AG04450 (cell line): ENCODE measurements at regions of chr7 and their contacts with region 1.

Region 1: DNA sequence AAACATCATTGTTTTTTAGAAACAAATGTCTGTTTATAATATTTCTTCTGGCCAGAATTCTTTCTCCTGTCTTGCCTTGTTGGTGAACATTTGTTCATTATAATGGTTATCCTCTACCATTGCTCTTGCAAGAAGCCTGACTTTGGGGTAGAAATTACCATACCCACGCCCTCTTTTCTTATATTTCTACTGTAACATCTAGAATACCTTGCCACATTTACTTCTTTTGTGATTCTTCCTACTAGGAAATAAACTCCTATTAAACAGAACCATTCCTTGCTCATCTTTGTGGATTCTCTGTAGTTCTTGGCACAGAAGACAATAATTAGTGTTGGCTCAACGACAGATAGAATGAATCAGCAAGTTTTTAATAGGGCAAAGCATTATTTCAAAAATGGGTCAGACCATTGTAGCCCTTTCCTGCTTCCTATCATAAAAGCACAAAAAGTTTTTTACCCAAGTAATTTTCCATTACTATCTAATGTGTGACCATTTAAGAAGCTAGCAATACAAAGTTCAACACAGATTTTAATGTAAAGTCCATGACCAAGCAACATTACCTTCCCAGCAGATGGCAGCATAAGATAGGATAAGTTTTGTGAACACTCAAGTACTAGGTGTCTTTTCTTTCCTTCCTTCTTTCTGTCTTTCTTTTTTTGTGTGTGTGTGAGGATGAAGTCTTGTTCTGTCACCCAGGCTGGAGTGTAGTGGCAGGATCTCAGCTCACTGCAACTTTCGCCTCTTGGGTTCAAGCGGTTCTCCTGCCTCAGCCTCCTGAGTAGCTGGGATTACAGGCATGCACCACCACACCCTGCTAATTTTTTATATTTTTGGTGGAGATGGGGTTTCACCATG is 270.4 kb downstream of the HGF start:
- DNase-seq: peak; percentile 72
- H3K4me3 ChIP-seq: no peak overlapping the region
- H3K27ac ChIP-seq: no peak overlapping the region
- H3K27me3 ChIP-seq: no peaks in the 10 kb centered on the region
- CTCF ChIP-seq: peak; percentile 68

Region 2: DNA sequence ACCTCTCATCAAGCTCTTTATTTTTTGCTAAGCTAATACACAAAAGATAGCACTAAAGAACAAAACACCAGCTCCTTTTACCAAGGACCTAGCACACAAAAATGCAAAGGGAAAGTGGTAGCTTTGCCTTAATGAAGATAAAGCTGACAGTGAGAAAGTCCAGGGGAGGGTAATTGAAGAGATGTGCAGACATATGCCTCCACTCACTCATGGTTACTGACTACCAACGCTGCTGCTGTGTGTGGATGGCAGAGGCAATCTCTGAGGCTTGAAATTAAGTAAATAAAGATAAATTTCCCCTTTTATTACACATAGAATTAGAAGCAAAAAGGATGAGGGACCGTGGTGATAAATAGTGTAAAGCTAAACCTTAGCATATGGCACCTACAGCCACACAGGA is 183.4 kb after region 1 on chr7:
- CTCF ChIA-PET with region 1: no interaction called
- POLR2A ChIA-PET with region 1: no interaction called
- DNase-seq: no peak
- H3K4me3 ChIP-seq: no peak overlapping the region
- H3K27ac ChIP-seq: no peak overlapping the region
- H3K27me3 ChIP-seq: no peaks in the 10 kb centered on the region
- CTCF ChIP-seq: no peak

Region 3: DNA sequence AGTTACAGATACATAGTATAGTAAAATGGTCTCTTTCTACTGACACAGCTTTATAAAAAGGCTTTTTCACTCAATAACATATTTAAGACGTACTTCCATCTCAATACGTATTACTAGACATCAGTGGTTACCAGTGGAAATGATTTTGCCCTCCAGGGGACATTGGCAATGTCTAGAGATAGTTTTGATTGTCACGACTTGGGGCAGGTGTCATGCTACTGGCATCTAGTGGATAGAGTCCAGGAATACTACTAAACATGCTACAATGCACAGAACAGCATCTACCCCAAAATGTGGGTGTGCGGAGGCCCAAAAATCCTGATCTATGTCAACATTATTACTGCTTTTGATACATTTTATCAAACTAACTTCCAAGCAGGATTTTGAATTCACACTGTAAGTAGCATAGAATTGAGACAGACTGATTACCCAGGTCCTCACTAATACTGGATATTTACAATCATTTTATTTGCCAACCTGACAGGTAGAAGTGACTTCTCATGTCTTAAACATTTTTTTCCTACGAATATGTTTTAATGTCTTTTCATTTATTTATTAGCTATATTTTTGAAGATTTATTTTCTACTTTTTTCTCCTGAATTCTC is 216.6 kb after region 1 on chr7:
- CTCF ChIA-PET with region 1: interaction called, 56 read pairs
- POLR2A ChIA-PET with region 1: no interaction called
- DNase-seq: no peak
- H3K4me3 ChIP-seq: no peak overlapping the region
- H3K27ac ChIP-seq: no peak overlapping the region
- H3K27me3 ChIP-seq: no peaks in the 10 kb centered on the region
- CTCF ChIP-seq: peak; percentile 32; the same call in 1 of the 2 replicates

Region 4: DNA sequence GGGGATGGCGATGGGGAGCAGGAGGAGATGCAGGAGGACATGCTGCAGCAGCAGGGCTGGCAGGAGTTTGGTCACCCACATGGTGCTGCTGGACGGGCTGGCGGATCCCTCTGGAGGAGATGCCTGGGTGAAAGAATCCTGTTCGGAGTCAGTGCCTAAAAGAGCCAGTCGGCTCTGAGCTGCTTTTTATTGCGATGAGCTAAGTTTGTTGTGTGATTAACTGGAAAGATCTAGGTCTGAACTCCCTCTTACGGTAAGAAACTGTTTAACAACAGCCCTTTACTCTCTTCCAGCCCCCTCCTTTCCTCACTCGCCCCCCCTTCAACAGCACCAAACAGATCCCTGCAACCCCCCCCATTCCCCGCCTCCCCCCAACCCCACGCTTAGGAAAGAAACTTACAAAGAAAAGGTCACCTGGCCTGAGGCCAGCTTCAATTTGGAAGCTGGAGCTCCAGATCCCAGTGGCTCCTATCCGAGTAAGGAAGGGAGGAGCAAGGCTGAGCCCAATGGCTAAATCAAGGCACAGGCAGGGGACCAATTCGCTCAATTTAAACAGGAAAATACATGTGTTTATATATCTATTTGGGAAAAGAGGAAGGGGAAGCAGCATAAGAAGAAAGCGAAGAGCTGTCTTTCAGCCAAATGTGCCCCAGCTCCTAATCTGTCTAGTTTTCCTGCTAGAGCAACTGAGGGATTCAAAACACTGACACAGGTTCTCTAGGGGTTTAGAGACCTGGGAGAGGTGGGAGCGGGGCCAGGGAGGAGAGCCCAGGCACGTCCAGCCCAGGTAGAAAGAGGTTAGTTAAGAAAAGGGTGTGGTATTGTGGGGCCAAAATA is 270.6 kb after region 1 on chr7 and contains the start of gene HGF:
- CTCF ChIA-PET with region 1: interaction called, 49 read pairs
- POLR2A ChIA-PET with region 1: no interaction called
- DNase-seq: peak; percentile 70
- H3K4me3 ChIP-seq: peak within 1 kb of the TSS; percentile 76
- H3K27ac ChIP-seq: peak within 1 kb of the TSS; percentile 54
- H3K27me3 ChIP-seq: no peaks in the 10 kb centered on the region
- CTCF ChIP-seq: peak; percentile 50
- polyA plus RNA-seq, gene HGF: 105 and 129 TPM in 2 replicates

Region 5: DNA sequence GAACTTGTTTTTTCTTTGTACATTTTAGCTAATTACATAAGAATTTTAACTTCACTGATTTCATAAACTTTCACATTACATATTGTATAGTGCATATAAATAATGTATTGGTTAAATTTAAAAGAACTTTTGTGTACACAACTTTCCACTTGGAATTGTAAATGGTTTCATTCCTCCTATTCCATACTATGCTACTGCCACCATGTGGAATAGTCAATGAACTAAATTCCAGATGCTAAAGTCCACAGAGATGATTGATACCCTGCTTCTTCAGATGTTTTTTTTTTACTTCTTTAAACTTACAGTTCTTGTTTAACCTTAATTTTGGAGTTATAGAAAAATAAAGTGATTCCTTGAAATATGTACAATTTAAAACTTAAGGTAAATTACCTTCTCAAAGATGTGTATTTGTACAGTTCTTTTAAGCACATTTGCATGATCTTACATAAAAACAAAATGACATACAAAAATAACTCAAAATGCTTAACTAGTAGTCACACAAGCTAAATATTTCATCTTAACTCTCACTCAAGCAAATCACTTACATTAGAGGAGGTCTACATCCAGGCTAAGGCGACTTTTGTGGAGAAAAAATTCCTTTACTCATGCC is 518.0 kb after region 1 on chr7:
- CTCF ChIA-PET with region 1: interaction called, 132 read pairs
- POLR2A ChIA-PET with region 1: no interaction called
- DNase-seq: peak; percentile 13
- H3K4me3 ChIP-seq: no peak overlapping the region
- H3K27ac ChIP-seq: no peak overlapping the region
- H3K27me3 ChIP-seq: no peaks in the 10 kb centered on the region
- CTCF ChIP-seq: peak; percentile 65

Region 6: DNA sequence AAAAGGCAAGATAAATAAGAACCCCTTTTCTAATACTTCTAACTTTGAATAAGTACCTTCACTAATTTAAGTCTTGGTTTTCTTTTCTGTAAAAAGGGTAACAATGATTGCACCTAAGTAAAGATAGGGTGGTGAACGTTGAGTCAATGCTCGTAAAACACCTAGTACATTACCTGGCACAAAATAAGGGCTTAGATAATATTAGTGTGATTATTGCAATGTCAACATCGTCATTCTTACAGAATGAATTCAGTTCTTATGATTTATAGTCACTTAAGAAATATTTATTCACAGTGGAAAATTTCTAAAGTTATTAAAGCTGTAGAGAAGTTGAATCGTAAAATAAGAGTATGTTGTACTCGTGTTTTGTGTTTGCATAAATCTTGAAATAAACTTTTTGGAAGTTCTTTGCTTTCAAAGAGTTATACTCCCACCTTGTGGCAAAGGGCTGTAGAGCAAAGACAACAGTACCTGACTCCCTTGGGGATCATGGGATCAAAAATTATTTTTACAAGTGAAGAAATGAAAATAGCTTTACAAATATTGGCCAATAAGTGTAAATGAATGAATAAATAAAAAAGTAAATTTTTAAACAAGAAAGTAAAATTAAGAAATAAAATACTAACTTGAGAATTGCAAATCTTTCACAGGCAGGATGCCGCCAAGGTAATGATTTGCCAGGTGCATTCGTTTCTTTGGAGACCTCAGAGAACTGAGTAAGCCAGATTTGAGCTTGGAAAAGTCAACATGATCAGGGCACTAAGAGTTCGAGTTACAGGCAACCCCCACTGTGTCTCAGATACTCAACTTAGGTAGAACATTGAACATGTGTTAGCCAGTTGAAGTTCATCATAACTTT is 1229.9 kb after region 1 on chr7:
- CTCF ChIA-PET with region 1: interaction called, 26 read pairs
- POLR2A ChIA-PET with region 1: no interaction called
- DNase-seq: peak; percentile 27
- H3K4me3 ChIP-seq: no peak overlapping the region
- H3K27ac ChIP-seq: no peak overlapping the region
- H3K27me3 ChIP-seq: no peaks in the 10 kb centered on the region
- CTCF ChIP-seq: peak; percentile 84